ENCODE measurements at regions of chr5 and their contacts with region 1.

Region 1: GRCh38 chr5:141618804-141619554 is at the start of gene DIAPH1:
- DNase-seq: peak; percentile 98 to 99
- ATAC-seq: peak; percentile 98
- H3K4me3 ChIP-seq: peak within 1 kb of the TSS; percentile 97 to 98
- H3K27ac ChIP-seq: peak within 1 kb of the TSS; percentile 74 to 91
- H3K4me1 ChIP-seq: peaks cover 0 to 8% of the 10 kb centered on the region in 2 donors
- H3K27me3 ChIP-seq: no peaks in the 10 kb centered on the region
- total RNA-seq, gene DIAPH1: 93.4 to 125 TPM

Region 2: GRCh38 chr5:141570655-141571054 is 48.3 kb before region 1 on chr5:
- intact Hi-C with region 1: loop called in 1 of 2 experiments (anchors 10 kb)
- DNase-seq: no peak
- ATAC-seq: no peak
- H3K4me3 ChIP-seq: no peak overlapping the region
- H3K27ac ChIP-seq: no peak overlapping the region
- H3K4me1 ChIP-seq: no peaks in the 10 kb centered on the region
- H3K27me3 ChIP-seq: no peaks in the 10 kb centered on the region

Region 3: GRCh38 chr5:141597394-141597793 is 21.6 kb before region 1 on chr5:
- intact Hi-C with region 1: loop called (anchors 1 kb)
- DNase-seq: no peak
- ATAC-seq: no peak
- H3K4me3 ChIP-seq: no peak overlapping the region
- H3K27ac ChIP-seq: peak overlapping the region in 1 of 2 donors; percentile 25
- H3K4me1 ChIP-seq: peaks cover 0 to 5% of the 10 kb centered on the region in 2 donors
- H3K27me3 ChIP-seq: no peaks in the 10 kb centered on the region

Measured in aorta (tissue), 5 donors.